HCT116 (cell line): ENCODE measurements at regions of chr12 and their contacts with region 1.

Region 1: DNA sequence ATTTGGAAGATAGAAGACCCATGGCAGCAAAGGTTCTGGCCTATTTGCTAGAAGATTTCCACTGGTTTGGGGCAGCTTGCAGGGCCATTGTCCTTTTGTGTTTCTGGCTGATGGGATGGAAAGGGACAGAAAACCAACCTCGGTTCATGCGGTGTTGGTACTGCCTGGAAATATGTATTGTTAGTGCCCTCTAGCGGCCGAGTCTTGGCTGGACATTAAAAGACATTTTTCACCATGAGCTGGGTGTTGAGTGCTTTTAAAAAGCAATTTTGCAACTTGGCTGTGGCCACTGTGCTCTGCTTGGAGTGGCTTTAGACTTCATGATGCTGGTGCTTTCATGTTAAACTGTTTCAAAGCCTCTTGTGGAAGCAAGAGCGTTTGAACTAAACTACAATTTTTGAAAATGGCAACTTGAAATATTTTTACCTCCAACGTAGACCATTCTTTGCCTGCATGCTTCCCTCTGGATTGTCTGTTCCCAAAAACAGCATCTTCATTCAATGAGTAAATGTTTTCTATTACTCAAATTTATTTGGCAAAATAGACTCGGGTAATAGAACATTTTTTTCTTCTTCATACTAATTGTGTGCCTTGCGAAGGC is 102.7 kb upstream of the TBX5 start:
- DNase-seq: peak; percentile 62
- ATAC-seq: peak; percentile 90
- H3K4me3 ChIP-seq: no peak overlapping the region
- H3K27ac ChIP-seq: no peak overlapping the region
- H3K4me1 ChIP-seq: no peaks in the 10 kb centered on the region
- H3K27me3 ChIP-seq: peaks cover 49% of the 10 kb centered on the region
- CTCF ChIP-seq: peak; percentile 62 to 90 (median 72); a peak in 5 of 6 replicates
- POLR2A ChIP-seq: no peak
- RAD21 ChIP-seq: peak; percentile 81

Region 2: DNA sequence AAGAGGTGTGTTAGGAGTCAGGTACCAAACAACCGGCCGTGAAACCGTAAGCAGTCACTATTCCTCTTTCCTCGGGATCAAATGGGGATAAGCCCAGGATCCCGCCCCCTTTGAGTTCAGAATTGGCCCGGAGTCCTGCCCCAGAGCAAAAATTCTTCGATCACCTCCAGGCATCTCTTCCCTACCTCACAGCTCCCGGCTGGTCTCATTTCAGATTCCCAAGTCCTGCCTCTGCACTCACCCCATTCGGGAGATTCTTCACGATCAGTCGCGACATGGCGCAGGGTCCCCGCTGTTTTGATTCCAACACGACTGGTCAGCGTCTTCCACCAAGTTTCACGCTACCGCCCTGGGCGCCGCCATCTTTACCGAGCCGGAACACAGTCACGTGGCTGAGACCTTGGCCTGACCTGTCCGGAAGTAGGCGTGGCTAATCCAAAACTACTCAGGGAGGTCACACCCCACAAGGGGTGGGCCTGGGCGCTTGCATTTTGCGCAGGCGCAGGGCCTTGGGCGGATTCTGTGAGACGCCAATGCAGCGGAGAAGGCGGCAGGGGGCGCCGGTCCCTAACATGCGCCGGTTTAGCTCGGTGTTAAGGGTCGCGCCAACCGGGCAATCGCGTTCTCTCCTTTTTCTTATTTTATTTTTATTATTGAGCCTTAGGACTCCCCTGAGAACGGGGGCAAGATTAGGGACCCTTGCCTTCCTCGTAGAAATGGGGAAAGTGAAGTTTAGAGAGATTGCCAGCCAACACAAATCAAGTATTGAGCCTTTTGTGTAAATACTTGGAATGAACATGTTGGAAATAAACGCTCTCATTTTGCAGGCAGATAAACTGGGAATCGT is 542.5 kb before region 1 on chr12 and contains the start of gene RBM19:
- CTCF ChIA-PET with region 1: interaction called, 12 read pairs
- POLR2A ChIA-PET with region 1: no interaction called
- RAD21 ChIA-PET with region 1: no interaction called
- intact Hi-C with region 1: no loop called
- DNase-seq: peak; percentile 96
- ATAC-seq: peak; percentile 99
- H3K4me3 ChIP-seq: peak within 1 kb of the TSS; percentile 91 to 98
- H3K27ac ChIP-seq: peak within 1 kb of the TSS; percentile 23; the same call in 1 of the 2 replicates
- H3K4me1 ChIP-seq: peaks cover 6 to 15% of the 10 kb centered on the region in 2 experiments; a peak in 3 of 4 replicates
- H3K27me3 ChIP-seq: no peaks in the 10 kb centered on the region
- CTCF ChIP-seq: peak; percentile 60 to 81 (median 81); a peak in 5 of 6 replicates
- POLR2A ChIP-seq: peak; percentile 43
- RAD21 ChIP-seq: peak; percentile 58
- total RNA-seq, gene RBM19: 30.7 TPM

Region 3: DNA sequence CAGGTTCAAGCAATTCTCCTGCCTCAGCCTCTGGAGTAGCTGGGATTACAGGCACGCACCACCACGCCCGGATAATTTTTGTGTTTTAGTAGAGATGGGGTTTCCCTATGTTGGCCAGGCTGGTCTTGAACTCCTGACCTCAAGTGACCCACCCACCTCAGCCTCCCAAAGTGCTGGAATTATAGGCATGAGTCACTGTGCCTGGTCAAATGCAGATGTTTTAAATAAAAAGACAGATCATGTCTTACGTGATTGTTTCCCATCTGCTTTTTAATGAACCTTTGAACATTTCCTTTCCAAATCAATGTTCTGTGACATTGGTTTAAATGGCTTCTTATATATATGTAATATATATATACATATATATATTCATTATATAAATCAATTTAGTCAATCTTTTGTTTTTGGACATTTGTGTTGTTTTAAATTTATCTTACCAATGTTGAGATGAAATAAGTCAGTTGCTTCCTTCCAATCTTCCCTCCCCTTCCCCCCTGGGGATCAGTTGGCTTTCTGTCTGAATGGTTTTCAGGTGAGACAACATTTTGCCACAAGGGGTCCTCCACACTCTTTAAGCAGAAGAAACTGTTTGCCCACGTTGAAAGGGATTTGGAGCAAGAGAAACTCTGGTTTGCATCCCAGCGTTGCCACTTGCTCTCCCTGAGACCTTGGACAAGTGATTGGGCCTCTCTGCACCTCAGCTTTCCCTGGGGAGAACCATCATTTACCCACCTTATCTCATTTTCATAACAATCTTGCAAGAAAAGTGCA is 494.9 kb before region 1 on chr12:
- CTCF ChIA-PET with region 1: interaction called, 3 read pairs
- POLR2A ChIA-PET with region 1: no interaction called
- RAD21 ChIA-PET with region 1: no interaction called
- intact Hi-C with region 1: loop called (anchors 1 kb)
- DNase-seq: peak; percentile 31
- ATAC-seq: peak; percentile 70
- H3K4me3 ChIP-seq: no peak overlapping the region
- H3K27ac ChIP-seq: no peak overlapping the region
- H3K4me1 ChIP-seq: no peaks in the 10 kb centered on the region
- H3K27me3 ChIP-seq: peaks cover 33% of the 10 kb centered on the region
- CTCF ChIP-seq: peak; percentile 35 to 52 (median 41); a peak in 5 of 6 replicates
- POLR2A ChIP-seq: no peak
- RAD21 ChIP-seq: peak; percentile 71

Region 4: DNA sequence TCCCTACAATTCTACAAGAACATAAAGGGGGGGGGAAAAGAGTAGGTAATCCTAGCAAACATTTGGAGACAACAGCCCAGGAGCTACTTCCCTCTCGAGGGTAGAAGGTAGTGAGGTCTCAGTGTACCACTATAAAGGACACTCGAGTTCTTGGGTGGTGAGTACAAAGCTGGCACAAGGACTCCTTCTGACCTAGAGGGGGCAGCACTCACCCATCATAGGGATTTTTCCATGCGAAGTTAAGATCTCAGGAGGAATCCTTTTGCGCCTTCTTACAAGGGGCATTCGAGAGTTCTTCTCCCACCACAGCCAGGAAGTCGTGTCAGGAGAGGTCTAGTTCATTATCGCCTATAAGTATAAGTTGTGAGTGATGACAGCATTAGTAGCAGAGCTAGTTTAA is 342.3 kb before region 1 on chr12:
- CTCF ChIA-PET with region 1: interaction called, 27 read pairs
- POLR2A ChIA-PET with region 1: no interaction called
- RAD21 ChIA-PET with region 1: no interaction called
- intact Hi-C with region 1: loop called (anchors 1 kb)
- DNase-seq: peak; percentile 24
- ATAC-seq: peak; percentile 76
- H3K4me3 ChIP-seq: no peak overlapping the region
- H3K27ac ChIP-seq: no peak overlapping the region
- H3K4me1 ChIP-seq: peaks cover 0 to 14% of the 10 kb centered on the region in 2 experiments; a peak in 2 of 4 replicates
- H3K27me3 ChIP-seq: peaks cover 33% of the 10 kb centered on the region
- CTCF ChIP-seq: peak; percentile 44 to 78 (median 72); a peak in 5 of 6 replicates
- POLR2A ChIP-seq: no peak
- RAD21 ChIP-seq: peak; percentile 74

Region 5: DNA sequence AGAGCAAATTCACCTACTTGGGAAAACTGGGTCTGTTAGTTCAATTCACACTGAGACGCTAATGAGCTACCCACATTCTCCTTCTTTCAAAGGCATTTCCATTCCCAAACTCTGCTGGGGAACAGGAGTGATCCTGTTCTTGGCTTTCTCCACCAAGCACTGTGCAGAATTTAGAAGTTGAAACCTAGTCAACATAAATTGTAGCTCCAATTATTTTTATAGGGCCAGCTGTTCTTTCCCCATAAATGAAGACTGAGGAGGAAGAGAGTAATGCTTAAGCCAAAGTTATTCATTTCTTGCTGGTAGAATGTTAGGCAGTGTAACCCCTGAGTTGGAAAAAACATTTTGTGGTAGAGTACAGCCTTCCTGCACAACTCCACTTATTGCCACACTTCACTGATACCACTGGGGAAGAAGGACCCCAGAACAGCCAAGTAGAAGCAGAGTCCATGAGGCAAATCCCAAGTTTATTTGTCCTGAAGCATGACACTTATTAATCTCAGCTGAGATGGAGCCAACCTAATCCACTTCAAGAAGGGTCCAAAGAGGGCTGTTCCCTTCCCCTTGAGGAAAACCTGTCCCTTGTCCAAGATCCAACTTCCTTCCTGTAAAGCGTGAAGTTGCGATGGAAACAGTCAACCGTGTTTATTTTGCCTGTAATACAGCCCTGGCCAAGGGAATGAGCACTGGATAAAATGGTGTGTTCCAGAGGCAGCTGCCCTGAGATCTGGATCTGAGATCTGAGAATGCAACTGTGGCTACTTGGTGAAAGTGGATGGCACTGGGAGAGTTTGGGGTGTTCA is 254.5 kb before region 1 on chr12:
- CTCF ChIA-PET with region 1: no interaction called
- POLR2A ChIA-PET with region 1: no interaction called
- RAD21 ChIA-PET with region 1: no interaction called
- intact Hi-C with region 1: no loop called
- DNase-seq: no peak
- ATAC-seq: no peak
- H3K4me3 ChIP-seq: no peak overlapping the region
- H3K27ac ChIP-seq: no peak overlapping the region
- H3K4me1 ChIP-seq: no peaks in the 10 kb centered on the region
- H3K27me3 ChIP-seq: no peaks in the 10 kb centered on the region
- CTCF ChIP-seq: no peak
- POLR2A ChIP-seq: no peak
- RAD21 ChIP-seq: no peak

Region 6: DNA sequence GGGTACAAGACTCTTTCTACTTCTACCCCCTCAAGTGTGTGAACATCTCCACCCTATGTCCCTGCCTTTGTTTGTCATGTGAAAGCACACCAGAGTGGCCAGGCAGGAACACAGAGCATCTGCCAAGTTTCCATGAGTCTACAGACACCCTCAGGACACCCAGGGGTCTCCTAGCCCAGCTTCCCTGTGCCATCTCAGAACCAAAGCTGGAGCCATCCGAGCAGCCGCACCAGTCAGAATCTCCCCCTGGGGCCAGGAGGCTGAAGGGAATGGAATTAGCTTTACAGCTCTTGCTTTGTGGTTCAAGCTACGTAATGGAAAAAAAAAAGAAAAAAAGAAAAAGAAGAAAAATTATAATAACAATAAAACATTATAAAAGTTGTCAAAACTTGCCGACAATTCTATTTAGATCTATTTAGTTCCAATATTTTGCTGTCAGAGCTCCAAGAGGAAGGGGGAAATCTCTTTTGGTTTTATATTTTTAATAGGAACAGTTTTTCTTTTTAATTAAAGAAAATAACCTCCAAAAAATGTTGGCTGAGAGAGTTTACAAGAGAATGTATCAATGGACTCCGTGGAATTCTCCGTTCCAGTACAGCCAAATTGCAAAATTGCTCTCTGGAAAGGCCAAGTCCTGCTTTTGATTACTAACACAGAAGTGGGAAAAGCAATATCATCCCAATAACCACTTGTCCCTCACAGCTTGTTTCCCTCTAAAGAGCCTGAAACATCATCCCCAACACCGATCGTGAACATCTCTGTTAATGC is 139.8 kb before region 1 on chr12:
- CTCF ChIA-PET with region 1: no interaction called
- POLR2A ChIA-PET with region 1: no interaction called
- RAD21 ChIA-PET with region 1: no interaction called
- intact Hi-C with region 1: no loop called
- DNase-seq: no peak
- ATAC-seq: no peak
- H3K4me3 ChIP-seq: no peak overlapping the region
- H3K27ac ChIP-seq: no peak overlapping the region
- H3K4me1 ChIP-seq: no peaks in the 10 kb centered on the region
- H3K27me3 ChIP-seq: peaks cover 41% of the 10 kb centered on the region
- CTCF ChIP-seq: no peak
- POLR2A ChIP-seq: no peak
- RAD21 ChIP-seq: no peak

Region 7: DNA sequence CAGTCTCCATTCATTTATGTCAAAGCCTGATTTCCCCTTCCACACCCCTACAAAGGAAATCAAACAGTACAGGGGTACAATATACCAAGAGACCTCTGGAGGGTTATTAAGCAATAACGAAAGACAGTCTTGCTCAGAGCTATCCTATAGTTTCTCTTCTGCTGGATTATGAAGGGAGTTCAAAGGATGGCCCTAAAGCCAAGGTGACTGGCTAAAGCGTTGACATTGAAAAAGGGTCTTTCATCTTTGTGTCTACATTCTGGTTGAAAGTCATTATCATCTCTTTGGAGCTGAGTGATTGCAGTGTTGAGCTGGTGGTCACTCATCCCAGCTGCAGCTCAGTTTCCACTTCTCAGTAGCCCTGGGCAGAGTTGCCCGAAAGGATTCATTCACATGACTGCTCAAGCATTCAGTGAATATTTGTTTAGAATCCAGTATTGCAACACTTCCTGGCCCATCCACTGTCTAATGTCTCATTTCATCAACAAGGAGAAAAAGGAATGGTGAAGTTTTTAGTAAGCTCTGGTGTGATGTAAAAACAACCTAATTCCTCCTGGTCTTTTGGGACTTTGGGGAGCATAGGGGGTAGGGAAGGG is 83.5 kb before region 1 on chr12:
- CTCF ChIA-PET with region 1: no interaction called
- POLR2A ChIA-PET with region 1: no interaction called
- RAD21 ChIA-PET with region 1: no interaction called
- intact Hi-C with region 1: no loop called
- DNase-seq: no peak
- ATAC-seq: no peak
- H3K4me3 ChIP-seq: no peak overlapping the region
- H3K27ac ChIP-seq: no peak overlapping the region
- H3K4me1 ChIP-seq: no peaks in the 10 kb centered on the region
- H3K27me3 ChIP-seq: peaks cover 43% of the 10 kb centered on the region
- CTCF ChIP-seq: no peak
- POLR2A ChIP-seq: no peak
- RAD21 ChIP-seq: no peak

Region 8: GRCh38 chr12:114935658-114936057 is 427.0 kb after region 1 on chr12:
- CTCF ChIA-PET with region 1: no interaction called
- POLR2A ChIA-PET with region 1: no interaction called
- RAD21 ChIA-PET with region 1: no interaction called
- intact Hi-C with region 1: no loop called
- DNase-seq: no peak
- ATAC-seq: peak; percentile 55
- H3K4me3 ChIP-seq: no peak overlapping the region
- H3K27ac ChIP-seq: no peak overlapping the region
- H3K4me1 ChIP-seq: peaks cover 12 to 28% of the 10 kb centered on the region in 2 experiments
- H3K27me3 ChIP-seq: no peaks in the 10 kb centered on the region
- CTCF ChIP-seq: peak; percentile 40 to 48 (median 44); a peak in 5 of 6 replicates
- POLR2A ChIP-seq: no peak
- RAD21 ChIP-seq: peak; percentile 52